ENCODE measurements at regions of chr14 and their contacts with region 1.

Region 1: DNA sequence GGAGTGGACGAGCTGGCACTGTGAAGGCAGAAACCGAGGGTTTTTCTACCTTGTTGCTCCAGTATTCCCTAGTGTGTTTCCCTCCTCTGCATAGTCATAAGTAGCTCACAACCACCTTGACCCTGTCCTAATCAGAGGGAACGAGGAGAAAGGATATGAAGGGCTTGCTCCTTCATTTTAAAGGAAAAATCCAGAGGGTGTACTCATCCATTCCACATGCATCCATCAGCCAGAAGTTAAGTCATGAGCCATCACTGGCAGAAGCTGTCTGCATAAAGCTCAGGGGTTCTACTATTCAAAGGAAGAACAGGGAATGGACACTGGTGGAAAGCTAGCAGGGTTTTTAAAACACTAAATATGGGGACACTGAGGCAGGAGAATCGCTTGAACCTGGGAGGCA is 84.3 kb upstream of the FOXN3 start:
- DNase-seq: no peak
- H3K4me3 ChIP-seq: no peak overlapping the region
- H3K27me3 ChIP-seq: no peaks in the 10 kb centered on the region
- CTCF ChIP-seq: no peak

Region 2: DNA sequence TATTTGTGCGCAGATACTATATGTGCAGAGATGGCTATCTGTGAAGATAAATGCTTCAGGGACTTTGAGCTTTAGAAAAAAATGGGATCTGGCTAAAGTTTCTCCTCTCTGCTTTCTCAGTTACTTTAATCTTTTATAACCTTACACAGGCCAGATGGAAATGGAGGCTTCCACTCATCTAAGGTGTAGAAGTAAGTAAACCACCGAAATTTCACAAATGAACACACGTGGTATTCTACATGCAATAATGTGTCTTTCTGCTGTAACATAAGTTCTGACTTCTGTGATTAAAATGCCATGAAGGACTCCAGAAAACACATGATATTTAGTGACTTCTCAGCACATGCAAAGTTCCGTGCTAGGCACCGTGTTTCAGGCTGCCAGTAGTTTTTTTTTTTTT is 14.8 kb after region 1 on chr14:
- CTCF ChIA-PET with region 1: no interaction called
- POLR2A ChIA-PET with region 1: interaction called, 25 read pairs
- DNase-seq: no peak
- H3K4me3 ChIP-seq: no peak overlapping the region
- H3K27me3 ChIP-seq: no peaks in the 10 kb centered on the region
- CTCF ChIP-seq: no peak

Region 3: GRCh38 chr14:89648510-89648909 is 147.1 kb after region 1 on chr14:
- CTCF ChIA-PET with region 1: no interaction called
- POLR2A ChIA-PET with region 1: no interaction called
- DNase-seq: no peak
- H3K4me3 ChIP-seq: no peak overlapping the region
- H3K27me3 ChIP-seq: no peaks in the 10 kb centered on the region
- CTCF ChIP-seq: no peak

Region 4: GRCh38 chr14:89805501-89805900 is 304.1 kb after region 1 on chr14:
- CTCF ChIA-PET with region 1: no interaction called
- POLR2A ChIA-PET with region 1: no interaction called
- DNase-seq: no peak
- H3K4me3 ChIP-seq: no peak overlapping the region
- H3K27me3 ChIP-seq: no peaks in the 10 kb centered on the region
- CTCF ChIP-seq: no peak

Measured in BJ (cell line).